Left cardiac atrium (tissue), 4 donors: ENCODE measurements at regions of chr1 and their contacts with region 1.

Region 1: DNA sequence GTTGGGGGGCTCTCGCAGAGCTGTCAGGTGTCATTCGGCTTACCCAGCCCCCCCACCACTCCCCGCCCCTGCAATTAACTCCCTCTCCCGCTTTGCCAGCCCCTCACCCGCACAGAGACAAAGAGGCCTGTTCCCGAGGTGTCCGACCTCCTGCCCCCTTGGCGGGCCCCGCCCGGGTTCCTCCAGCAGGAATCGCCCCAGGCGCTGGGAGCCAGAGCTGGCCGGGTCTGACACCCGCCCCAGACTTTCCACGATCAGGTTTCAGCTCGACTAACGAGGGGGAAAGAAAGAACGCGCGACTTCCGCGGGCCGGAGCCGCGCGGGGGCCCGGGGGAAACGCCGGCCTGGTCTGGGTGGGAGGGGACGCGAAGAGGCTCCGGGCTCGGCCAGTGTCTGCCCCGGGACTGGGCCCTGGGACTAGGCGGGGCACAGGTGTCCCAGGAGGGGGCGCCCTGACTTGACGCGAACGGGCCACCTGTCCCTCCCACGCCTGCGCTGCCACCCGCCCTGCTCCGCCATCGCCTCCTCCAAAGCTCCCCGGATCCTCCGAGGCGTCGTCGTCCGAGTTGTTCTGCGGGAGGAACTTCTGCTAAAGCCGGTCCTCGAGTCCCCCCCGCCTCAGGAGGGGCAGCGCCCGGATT is 36.4 kb upstream of the HHAT start:
- DNase-seq: peak; percentile 56
- ATAC-seq: peak; percentile 45 to 66

Region 2: DNA sequence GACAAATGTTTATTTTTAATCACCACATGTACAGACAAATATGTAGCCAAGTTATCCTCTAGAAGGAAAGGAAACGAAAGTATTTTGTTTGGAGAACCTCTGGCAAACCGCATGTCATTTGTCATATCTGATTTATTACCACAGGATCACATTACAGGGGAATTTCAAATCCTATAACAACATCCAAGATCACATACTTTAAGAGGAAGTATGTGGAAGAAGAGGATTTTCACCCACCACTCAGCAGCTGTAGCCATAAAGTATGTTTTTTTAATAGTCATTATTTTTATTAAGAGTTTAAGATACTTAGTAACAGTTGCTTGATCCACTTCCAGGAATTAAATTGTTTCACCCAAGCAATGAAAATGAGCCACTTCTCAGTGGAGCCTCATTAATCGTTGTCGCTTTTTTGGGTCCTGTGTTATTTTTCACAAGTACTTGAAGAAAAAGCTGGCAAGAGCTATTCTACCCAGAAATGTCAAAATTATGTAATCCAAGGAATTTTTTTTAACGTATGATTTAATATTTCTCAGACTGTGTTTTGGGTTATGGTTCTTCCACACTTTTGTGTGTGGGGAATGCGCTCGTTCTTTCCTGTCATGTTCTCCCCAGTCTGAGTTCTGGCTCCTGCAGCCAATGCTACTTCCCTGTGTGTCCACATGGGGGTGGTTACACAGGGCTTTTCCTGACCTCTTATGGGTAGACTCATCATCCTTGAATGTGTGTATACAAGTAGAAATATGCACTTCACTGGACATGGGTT is 52.8 kb before region 1 on chr1:
- intact Hi-C with region 1: loop called in 1 of 2 experiments (anchors 5 kb)
- DNase-seq: no peak
- ATAC-seq: peak; percentile 24 to 39

Region 3: GRCh38 chr1:210262167-210262896 is 30.0 kb before region 1 on chr1:
- intact Hi-C with region 1: no loop called
- DNase-seq: peak; percentile 57
- ATAC-seq: peak; percentile 79 to 87